ENCODE measurements at regions of chr12 and their contacts with region 1.

Region 1: DNA sequence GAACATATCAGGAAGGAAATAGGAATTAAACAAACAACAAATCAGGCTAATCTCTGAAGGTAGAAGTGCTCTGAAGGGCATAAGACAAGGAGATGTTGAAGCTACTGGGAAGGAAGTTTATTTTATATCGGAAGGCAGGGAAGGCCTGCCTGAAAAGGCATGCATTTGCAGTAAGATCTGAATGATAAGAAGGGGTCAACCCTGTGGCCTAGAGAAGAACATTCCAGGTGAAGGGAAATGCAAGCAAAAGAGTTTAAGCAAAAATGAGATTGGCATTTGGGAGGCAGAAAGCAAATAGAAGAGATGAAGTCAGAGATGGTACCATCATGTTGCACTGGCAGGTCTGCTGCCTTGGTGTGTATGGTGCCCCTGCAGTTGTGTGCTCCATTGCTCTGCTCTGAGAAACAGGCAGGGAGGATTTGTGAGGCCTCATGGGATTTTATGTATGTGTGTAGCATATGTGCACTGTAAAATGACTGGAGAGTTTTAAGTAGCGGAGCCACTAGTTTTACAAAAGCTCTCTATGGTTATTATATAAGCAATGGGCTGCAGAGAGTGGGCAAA is 6.7 kb downstream of the LDHB start:
- DNase-seq: no peak
- ATAC-seq: no peak
- H3K4me3 ChIP-seq: peak overlapping the region; percentile 1
- H3K4me3 Mint-ChIP-seq: peak overlapping the region; percentile 28 to 89 (median 68)
- H3K27ac ChIP-seq: peak overlapping the region; percentile 8
- H3K27ac Mint-ChIP-seq: peak overlapping the region; percentile 7 to 84 (median 73)
- H3K4me1 ChIP-seq: peaks cover 15 to 91% of the 10 kb centered on the region in 2 donors
- H3K4me1 Mint-ChIP-seq: peaks cover 71 to 100% (median 94%) of the 10 kb centered on the region in 7 donors
- H3K27me3 ChIP-seq: no peaks in the 10 kb centered on the region
- H3K27me3 Mint-ChIP-seq: no peaks in the 10 kb centered on the region

Region 2: GRCh38 chr12:21607701-21608100 is 43.2 kb before region 1 on chr12:
- CTCF ChIA-PET with region 1: interaction called, 10 read pairs
- POLR2A ChIA-PET with region 1: interaction called, 4 read pairs
- intact Hi-C with region 1: no loop called
- DNase-seq: peak in 6 of 9 donors; percentile 14 to 57 (median 43)
- ATAC-seq: no peak
- H3K4me3 ChIP-seq: no peak overlapping the region
- H3K4me3 Mint-ChIP-seq: no peak overlapping the region
- H3K27ac ChIP-seq: no peak overlapping the region
- H3K27ac Mint-ChIP-seq: no peak overlapping the region
- H3K4me1 ChIP-seq: peaks cover 0 to 10% of the 10 kb centered on the region in 2 donors
- H3K4me1 Mint-ChIP-seq: peaks cover 2 to 8% (median 7%) of the 10 kb centered on the region in 7 donors
- H3K27me3 ChIP-seq: no peaks in the 10 kb centered on the region
- H3K27me3 Mint-ChIP-seq: peaks cover 0 to 7% (median 0%) of the 10 kb centered on the region in 5 donors

Region 3: DNA sequence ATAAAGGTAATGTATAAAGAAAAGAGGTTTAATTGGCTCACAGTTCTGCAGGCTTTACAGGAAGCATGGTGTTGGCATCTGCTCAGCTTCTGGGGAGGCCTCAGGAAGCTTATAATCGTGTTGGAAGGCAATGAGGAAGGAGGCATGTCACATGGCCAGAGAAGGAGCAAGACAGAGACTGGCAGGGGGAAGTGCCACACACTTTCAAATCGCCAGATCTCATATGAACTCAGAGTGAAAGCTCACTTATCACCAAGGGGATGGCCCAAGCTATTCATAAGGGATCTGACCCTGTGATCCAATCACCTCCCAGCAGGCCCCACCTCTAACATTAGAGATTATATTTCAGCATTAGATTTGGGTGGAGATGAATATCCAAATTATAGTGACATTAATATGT is 19.5 kb before region 1 on chr12:
- CTCF ChIA-PET with region 1: interaction called, 3 read pairs
- POLR2A ChIA-PET with region 1: interaction called, 21 read pairs
- intact Hi-C with region 1: no loop called
- DNase-seq: no peak
- ATAC-seq: no peak
- H3K4me3 ChIP-seq: no peak overlapping the region
- H3K4me3 Mint-ChIP-seq: peak overlapping the region in 1 of 10 donors; percentile 13
- H3K27ac ChIP-seq: no peak overlapping the region
- H3K27ac Mint-ChIP-seq: peak overlapping the region in 6 of 9 donors; percentile 49 to 76 (median 64)
- H3K4me1 ChIP-seq: no peaks in the 10 kb centered on the region
- H3K4me1 Mint-ChIP-seq: peaks cover 0 to 35% (median 16%) of the 10 kb centered on the region in 7 donors
- H3K27me3 ChIP-seq: no peaks in the 10 kb centered on the region
- H3K27me3 Mint-ChIP-seq: no peaks in the 10 kb centered on the region

Region 4: DNA sequence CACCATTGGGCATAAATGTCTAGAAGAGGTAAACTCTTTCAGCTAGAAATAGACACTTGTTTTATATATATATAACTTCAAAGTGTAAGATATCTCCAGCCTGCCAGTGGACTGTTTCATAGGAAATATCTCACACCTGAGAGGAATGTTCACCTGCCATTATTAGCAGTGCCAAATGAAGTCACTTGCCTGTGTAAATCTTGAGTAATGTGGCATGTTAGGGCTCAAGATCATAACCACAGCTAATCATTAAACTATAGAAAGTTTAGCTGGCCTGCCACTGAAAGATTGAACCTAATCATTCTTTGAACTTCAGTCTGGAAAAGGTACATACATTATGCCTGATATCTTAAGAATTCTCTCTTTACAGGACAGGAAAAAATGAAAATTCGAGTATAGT is 149.1 kb after region 1 on chr12:
- CTCF ChIA-PET with region 1: no interaction called
- POLR2A ChIA-PET with region 1: no interaction called
- intact Hi-C with region 1: no loop called
- DNase-seq: no peak
- ATAC-seq: no peak
- H3K4me3 ChIP-seq: no peak overlapping the region
- H3K4me3 Mint-ChIP-seq: no peak overlapping the region
- H3K27ac ChIP-seq: no peak overlapping the region
- H3K27ac Mint-ChIP-seq: no peak overlapping the region
- H3K4me1 ChIP-seq: no peaks in the 10 kb centered on the region
- H3K4me1 Mint-ChIP-seq: no peaks in the 10 kb centered on the region
- H3K27me3 ChIP-seq: no peaks in the 10 kb centered on the region
- H3K27me3 Mint-ChIP-seq: peaks cover 0 to 17% (median 3%) of the 10 kb centered on the region in 5 donors